PC-3 (cell line): ENCODE measurements at regions of chr19 and their contacts with region 1.

Region 1: GRCh38 chr19:39480337-39481228 is at the start of gene TIMM50:
- DNase-seq: peak; percentile 93
- ATAC-seq: peak; percentile 93
- H3K4me3 ChIP-seq: peak within 1 kb of the TSS; percentile 84
- H3K27ac ChIP-seq: peak within 1 kb of the TSS; percentile 56
- H3K4me1 ChIP-seq: peaks cover 7% of the 10 kb centered on the region
- H3K27me3 ChIP-seq: no peaks in the 10 kb centered on the region
- CTCF ChIP-seq: no peak
- total RNA-seq, gene TIMM50: 97.2 and 123 TPM in 2 replicates

Region 2: GRCh38 chr19:39435499-39436349 is 44.9 kb before region 1 on chr19 and contains the start of gene RPS16:
- CTCF ChIA-PET with region 1: no interaction called
- POLR2A ChIA-PET with region 1: no interaction called
- intact Hi-C with region 1: no loop called
- DNase-seq: peak; percentile 95
- ATAC-seq: peak; percentile 87
- H3K4me3 ChIP-seq: peak within 1 kb of the TSS; percentile 95
- H3K27ac ChIP-seq: peak within 1 kb of the TSS; percentile 100
- H3K4me1 ChIP-seq: peaks cover 27% of the 10 kb centered on the region
- H3K27me3 ChIP-seq: no peaks in the 10 kb centered on the region
- CTCF ChIP-seq: no peak
- total RNA-seq, gene RPS16: 294 and 418 TPM in 2 replicates

Region 3: GRCh38 chr19:39463403-39463802 is 17.2 kb before region 1 on chr19:
- CTCF ChIA-PET with region 1: no interaction called
- POLR2A ChIA-PET with region 1: interaction called, 21 read pairs
- intact Hi-C with region 1: no loop called
- DNase-seq: no peak
- ATAC-seq: no peak
- H3K4me3 ChIP-seq: no peak overlapping the region
- H3K27ac ChIP-seq: no peak overlapping the region
- H3K4me1 ChIP-seq: no peaks in the 10 kb centered on the region
- H3K27me3 ChIP-seq: no peaks in the 10 kb centered on the region
- CTCF ChIP-seq: no peak

Region 4: DNA sequence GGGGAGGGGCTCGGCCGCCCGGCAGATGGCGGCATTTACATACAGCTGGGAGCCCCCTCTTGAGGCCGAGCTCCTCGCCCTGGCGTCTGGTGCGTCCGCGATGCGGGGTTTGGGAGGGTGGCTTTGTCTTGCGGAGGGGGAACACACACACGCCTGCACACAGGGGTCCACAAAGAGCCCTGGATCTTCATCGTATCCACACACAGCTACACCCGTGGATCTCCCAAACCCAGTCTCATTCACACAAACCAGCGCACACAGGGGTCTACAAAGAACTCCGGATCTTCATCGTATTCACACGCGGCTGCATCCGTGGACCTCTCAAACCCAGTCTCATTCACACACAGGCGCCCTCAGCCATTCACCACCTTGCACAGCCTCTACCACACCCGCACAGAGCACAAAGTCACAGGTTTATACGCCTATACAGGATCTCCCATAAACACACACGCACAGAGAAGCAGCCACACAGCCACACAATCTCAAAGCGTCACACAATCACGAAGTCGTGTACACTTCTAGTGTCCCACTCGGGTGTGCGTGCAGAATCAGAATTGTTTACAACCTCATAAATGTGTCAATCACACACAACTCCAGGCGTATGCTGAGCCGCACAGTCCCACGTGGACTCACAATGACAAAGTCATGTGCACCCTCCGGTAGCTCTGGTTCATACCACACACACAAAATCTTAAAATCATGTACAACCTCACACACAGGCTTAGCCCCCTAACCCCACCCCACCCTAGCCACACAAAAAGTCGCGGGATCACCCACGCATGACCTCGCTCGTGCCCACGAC is 17.6 kb after region 1 on chr19:
- CTCF ChIA-PET with region 1: no interaction called
- POLR2A ChIA-PET with region 1: interaction called, 10 read pairs
- intact Hi-C with region 1: no loop called
- DNase-seq: peak; percentile 50
- ATAC-seq: peak; percentile 72
- H3K4me3 ChIP-seq: peak overlapping the region; percentile 63
- H3K27ac ChIP-seq: no peak overlapping the region
- H3K4me1 ChIP-seq: peaks cover 7% of the 10 kb centered on the region
- H3K27me3 ChIP-seq: no peaks in the 10 kb centered on the region
- CTCF ChIP-seq: peak; percentile 47